ENCODE measurements at regions of chr17 and their contacts with region 1.

Region 1: GRCh38 chr17:29777663-29778062 is 152.4 kb downstream of the SSH2 start:
- DNase-seq: no peak
- H3K4me3 ChIP-seq: no peak overlapping the region
- H3K4me3 Mint-ChIP-seq: no peak overlapping the region
- H3K27ac ChIP-seq: no peak overlapping the region
- H3K27ac Mint-ChIP-seq: no peak overlapping the region
- H3K4me1 ChIP-seq: peaks cover 8% of the 10 kb centered on the region
- H3K4me1 Mint-ChIP-seq: peaks cover 5 to 9% (median 7%) of the 10 kb centered on the region in 4 donors
- H3K27me3 ChIP-seq: no peaks in the 10 kb centered on the region
- H3K27me3 Mint-ChIP-seq: no peaks in the 10 kb centered on the region

Region 2: DNA sequence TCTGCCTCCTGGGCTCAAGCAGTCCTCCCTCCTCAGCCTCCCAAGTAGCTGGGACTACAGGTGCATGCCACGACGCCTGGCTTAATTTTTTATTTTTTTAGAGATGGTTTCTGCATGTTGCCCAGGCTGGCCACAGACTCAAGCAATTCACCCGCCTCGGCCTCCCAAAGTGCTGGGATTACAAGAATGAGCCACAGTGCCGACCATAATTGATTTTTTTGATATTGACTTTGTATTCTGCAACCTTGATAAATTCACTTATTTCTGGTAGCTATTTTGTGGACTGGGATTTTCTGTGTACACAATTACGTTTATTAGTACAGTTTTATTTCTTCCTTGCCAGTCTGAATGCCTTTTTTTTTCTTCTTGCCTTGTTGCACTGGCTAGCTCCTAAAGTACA is 357.5 kb before region 1 on chr17:
- CTCF ChIA-PET with region 1: no interaction called
- POLR2A ChIA-PET with region 1: no interaction called
- intact Hi-C with region 1: no loop called
- DNase-seq: no peak
- H3K4me3 ChIP-seq: no peak overlapping the region
- H3K4me3 Mint-ChIP-seq: no peak overlapping the region
- H3K27ac ChIP-seq: no peak overlapping the region
- H3K27ac Mint-ChIP-seq: no peak overlapping the region
- H3K4me1 ChIP-seq: no peaks in the 10 kb centered on the region
- H3K4me1 Mint-ChIP-seq: peaks cover 11 to 32% (median 15%) of the 10 kb centered on the region in 4 donors
- H3K27me3 ChIP-seq: no peaks in the 10 kb centered on the region
- H3K27me3 Mint-ChIP-seq: no peaks in the 10 kb centered on the region

Region 3: DNA sequence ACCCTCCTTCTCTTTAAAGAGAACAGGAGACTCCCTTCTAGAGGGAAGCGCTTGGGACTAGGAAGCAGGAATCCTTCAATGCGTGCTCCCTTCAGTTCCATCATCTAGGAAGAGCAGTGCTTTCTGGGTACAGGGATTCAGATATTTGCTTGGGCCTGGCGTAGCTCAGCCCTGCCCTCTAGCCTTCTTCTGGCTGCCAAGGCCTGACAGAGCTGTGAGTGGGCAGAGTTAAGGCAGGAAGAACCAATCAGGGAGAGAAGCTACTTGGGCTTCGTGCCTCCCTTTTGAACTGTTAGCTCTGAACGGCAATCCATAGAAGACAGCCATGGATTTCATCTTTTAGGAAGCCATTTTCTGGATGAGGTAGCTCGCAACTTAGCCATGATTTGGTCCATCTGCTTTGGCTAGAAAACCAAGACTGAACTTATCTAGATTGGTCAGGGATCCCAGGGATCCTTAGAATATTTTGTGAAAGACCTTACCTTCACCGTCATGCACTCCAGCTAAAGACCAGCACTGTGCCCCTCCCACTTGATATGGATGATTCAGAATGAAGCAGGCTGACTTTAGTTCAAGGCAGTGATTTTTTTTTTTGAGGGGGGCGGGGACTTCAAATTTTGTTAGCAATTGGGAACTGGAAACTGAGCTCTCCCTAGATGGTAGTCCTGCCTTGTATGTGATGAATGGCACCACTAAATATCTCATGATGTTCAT is 152.5 kb before region 1 on chr17:
- CTCF ChIA-PET with region 1: interaction called, 81 read pairs
- POLR2A ChIA-PET with region 1: interaction called, 3 read pairs
- intact Hi-C with region 1: no loop called
- DNase-seq: no peak
- H3K4me3 ChIP-seq: no peak overlapping the region
- H3K4me3 Mint-ChIP-seq: no peak overlapping the region
- H3K27ac ChIP-seq: no peak overlapping the region
- H3K27ac Mint-ChIP-seq: peak overlapping the region in 6 of 7 donors; percentile 25 to 75 (median 32)
- H3K4me1 ChIP-seq: peaks cover 26% of the 10 kb centered on the region
- H3K4me1 Mint-ChIP-seq: peaks cover 14 to 37% (median 28%) of the 10 kb centered on the region in 4 donors
- H3K27me3 ChIP-seq: no peaks in the 10 kb centered on the region
- H3K27me3 Mint-ChIP-seq: no peaks in the 10 kb centered on the region

Region 4: DNA sequence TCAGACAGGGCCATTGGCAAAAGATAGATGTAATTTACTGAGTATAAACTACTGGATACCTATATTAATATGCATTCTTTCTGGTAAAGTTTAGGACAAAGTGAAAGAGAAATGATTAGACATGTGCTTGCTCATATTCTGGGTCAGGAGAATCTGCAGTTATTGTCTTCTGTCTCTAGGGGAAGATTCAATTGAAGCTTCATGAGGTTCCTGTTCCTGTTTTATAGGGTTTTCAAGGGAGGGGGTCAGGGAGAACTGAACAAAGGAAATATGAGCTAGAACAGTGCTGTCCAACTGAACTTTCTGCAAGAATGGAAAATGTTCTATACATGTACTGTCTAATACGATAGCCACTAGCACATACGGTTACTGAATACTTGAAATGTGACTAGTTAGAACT is 95.6 kb before region 1 on chr17:
- CTCF ChIA-PET with region 1: interaction called, 25 read pairs
- POLR2A ChIA-PET with region 1: no interaction called
- intact Hi-C with region 1: loop called (anchors 2 kb)
- DNase-seq: no peak
- H3K4me3 ChIP-seq: no peak overlapping the region
- H3K4me3 Mint-ChIP-seq: no peak overlapping the region
- H3K27ac ChIP-seq: no peak overlapping the region
- H3K27ac Mint-ChIP-seq: peak overlapping the region in 6 of 7 donors; percentile 1 to 69 (median 16)
- H3K4me1 ChIP-seq: peaks cover 8% of the 10 kb centered on the region
- H3K4me1 Mint-ChIP-seq: peaks cover 10 to 21% (median 13%) of the 10 kb centered on the region in 4 donors
- H3K27me3 ChIP-seq: no peaks in the 10 kb centered on the region
- H3K27me3 Mint-ChIP-seq: no peaks in the 10 kb centered on the region

Region 5: DNA sequence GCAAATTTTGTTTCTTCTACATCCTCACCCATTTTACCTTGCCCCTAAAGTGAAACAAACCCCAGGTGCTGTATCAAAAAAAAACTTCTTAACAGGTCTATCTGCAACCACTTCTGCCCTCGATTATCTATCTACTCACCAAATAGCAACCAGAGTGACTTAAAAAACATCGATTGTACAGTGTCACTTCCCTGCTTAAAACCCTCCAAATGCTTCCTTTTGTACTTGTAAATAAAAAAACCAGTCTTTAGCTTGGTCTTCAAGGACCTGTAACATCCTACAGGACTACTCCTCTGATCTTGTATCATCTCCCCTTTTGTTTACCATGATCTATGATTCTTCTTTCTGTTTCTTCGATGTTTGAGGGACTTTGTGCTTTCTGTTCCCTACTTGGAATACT is 72.3 kb before region 1 on chr17:
- CTCF ChIA-PET with region 1: interaction called, 28 read pairs
- POLR2A ChIA-PET with region 1: interaction called, 6 read pairs
- intact Hi-C with region 1: no loop called
- DNase-seq: peak in 4 of 5 donors; percentile 26 to 39 (median 28)
- H3K4me3 ChIP-seq: peak overlapping the region in 1 of 2 donors; percentile 16
- H3K4me3 Mint-ChIP-seq: peak overlapping the region; percentile 58 to 87 (median 76)
- H3K27ac ChIP-seq: peak overlapping the region; percentile 68
- H3K27ac Mint-ChIP-seq: peak overlapping the region; percentile 91 to 100 (median 98)
- H3K4me1 ChIP-seq: peaks cover 54% of the 10 kb centered on the region
- H3K4me1 Mint-ChIP-seq: peaks cover 30 to 61% (median 41%) of the 10 kb centered on the region in 4 donors
- H3K27me3 ChIP-seq: no peaks in the 10 kb centered on the region
- H3K27me3 Mint-ChIP-seq: no peaks in the 10 kb centered on the region

Region 6: GRCh38 chr17:29807520-29808351 is 30.1 kb after region 1 on chr17:
- CTCF ChIA-PET with region 1: interaction called, 10 read pairs
- POLR2A ChIA-PET with region 1: no interaction called
- intact Hi-C with region 1: no loop called
- DNase-seq: peak; percentile 62 to 72 (median 66)
- H3K4me3 ChIP-seq: no peak overlapping the region
- H3K4me3 Mint-ChIP-seq: peak overlapping the region in 1 of 8 donors; percentile 10
- H3K27ac ChIP-seq: no peak overlapping the region
- H3K27ac Mint-ChIP-seq: peak overlapping the region in 3 of 7 donors; percentile 23 to 67 (median 47)
- H3K4me1 ChIP-seq: peaks cover 16% of the 10 kb centered on the region
- H3K4me1 Mint-ChIP-seq: peaks cover 13 to 23% (median 20%) of the 10 kb centered on the region in 4 donors
- H3K27me3 ChIP-seq: no peaks in the 10 kb centered on the region
- H3K27me3 Mint-ChIP-seq: no peaks in the 10 kb centered on the region

Region 7: GRCh38 chr17:29883497-29883896 is 105.8 kb after region 1 on chr17:
- CTCF ChIA-PET with region 1: no interaction called
- POLR2A ChIA-PET with region 1: no interaction called
- intact Hi-C with region 1: no loop called
- DNase-seq: no peak
- H3K4me3 ChIP-seq: no peak overlapping the region
- H3K4me3 Mint-ChIP-seq: no peak overlapping the region
- H3K27ac ChIP-seq: no peak overlapping the region
- H3K27ac Mint-ChIP-seq: peak overlapping the region in 4 of 7 donors; percentile 4 to 54 (median 14)
- H3K4me1 ChIP-seq: peaks cover 11% of the 10 kb centered on the region
- H3K4me1 Mint-ChIP-seq: peaks cover 17 to 36% (median 23%) of the 10 kb centered on the region in 4 donors
- H3K27me3 ChIP-seq: no peaks in the 10 kb centered on the region
- H3K27me3 Mint-ChIP-seq: no peaks in the 10 kb centered on the region

Measured in CD4-positive, alpha-beta memory T cell (primary cell).